ENCODE measurements at regions of chr2 and their contacts with region 1.

Region 1: GRCh38 chr2:134411828-134412638 is 158.2 kb downstream of the MGAT5 start:
- DNase-seq: peak; percentile 82
- ATAC-seq: peak; percentile 96
- H3K4me3 Mint-ChIP-seq: no peak overlapping the region
- H3K27ac Mint-ChIP-seq: peak overlapping the region; percentile 38
- H3K4me1 Mint-ChIP-seq: peaks cover 45% of the 10 kb centered on the region
- H3K27me3 Mint-ChIP-seq: no peaks in the 10 kb centered on the region
- CTCF ChIP-seq: peak; percentile 62

Region 2: DNA sequence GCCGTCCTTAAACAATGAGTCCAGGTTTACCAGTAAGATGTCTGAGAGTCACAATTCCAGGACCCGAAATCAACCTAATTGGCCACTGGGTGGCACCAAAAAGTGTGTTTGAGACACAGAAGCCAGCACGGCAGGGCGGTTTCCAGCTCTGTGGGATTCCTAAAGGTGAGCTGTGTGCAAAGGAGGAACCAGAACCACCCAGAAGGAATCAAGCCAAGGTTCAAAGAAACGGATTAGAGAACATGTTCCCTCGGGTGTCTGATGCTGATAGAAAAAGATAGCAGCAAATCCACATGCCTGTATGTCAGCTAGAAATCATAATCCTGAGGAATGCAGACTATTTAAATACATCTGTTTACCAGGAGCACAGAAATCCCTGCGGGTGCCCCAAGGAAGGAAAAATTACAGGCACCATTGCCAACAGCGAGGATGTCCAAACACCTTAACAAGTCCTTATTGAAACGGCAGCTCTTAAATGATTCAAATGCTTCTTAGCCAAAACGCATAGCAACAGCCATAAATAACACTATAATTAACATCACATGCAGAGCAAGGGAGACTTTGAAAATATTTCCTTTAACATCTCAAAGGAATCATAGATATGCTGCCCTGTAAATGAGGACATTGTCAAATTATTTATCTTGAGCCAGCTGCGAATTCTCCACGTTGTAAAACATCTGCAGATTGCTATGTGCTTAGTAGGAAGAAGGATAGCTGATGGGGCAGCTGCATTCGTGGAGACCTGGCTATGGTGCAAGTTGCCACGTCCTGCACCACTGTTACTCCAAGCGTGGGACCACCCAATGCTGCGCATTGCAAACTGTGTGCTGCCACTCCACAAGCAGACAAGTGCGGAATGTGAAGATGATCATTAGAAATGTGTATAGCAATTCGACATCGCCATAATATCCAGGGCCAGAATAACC is 525.0 kb before region 1 on chr2:
- CTCF ChIA-PET with region 1: interaction called, 16 read pairs
- POLR2A ChIA-PET with region 1: no interaction called
- intact Hi-C with region 1: no loop called
- DNase-seq: peak; percentile 67
- ATAC-seq: peak; percentile 51
- H3K4me3 Mint-ChIP-seq: no peak overlapping the region
- H3K27ac Mint-ChIP-seq: no peak overlapping the region
- H3K4me1 Mint-ChIP-seq: no peaks in the 10 kb centered on the region
- H3K27me3 Mint-ChIP-seq: peaks cover 7% of the 10 kb centered on the region
- CTCF ChIP-seq: peak; percentile 51

Region 3: GRCh38 chr2:134127496-134127895 is 284.5 kb before region 1 on chr2:
- CTCF ChIA-PET with region 1: interaction called, 14 read pairs
- POLR2A ChIA-PET with region 1: interaction called, 3 read pairs
- intact Hi-C with region 1: no loop called
- DNase-seq: peak; percentile 86
- ATAC-seq: peak; percentile 93
- H3K4me3 Mint-ChIP-seq: peak overlapping the region; percentile 1
- H3K27ac Mint-ChIP-seq: no peak overlapping the region
- H3K4me1 Mint-ChIP-seq: peaks cover 77% of the 10 kb centered on the region
- H3K27me3 Mint-ChIP-seq: no peaks in the 10 kb centered on the region
- CTCF ChIP-seq: no peak

Region 4: DNA sequence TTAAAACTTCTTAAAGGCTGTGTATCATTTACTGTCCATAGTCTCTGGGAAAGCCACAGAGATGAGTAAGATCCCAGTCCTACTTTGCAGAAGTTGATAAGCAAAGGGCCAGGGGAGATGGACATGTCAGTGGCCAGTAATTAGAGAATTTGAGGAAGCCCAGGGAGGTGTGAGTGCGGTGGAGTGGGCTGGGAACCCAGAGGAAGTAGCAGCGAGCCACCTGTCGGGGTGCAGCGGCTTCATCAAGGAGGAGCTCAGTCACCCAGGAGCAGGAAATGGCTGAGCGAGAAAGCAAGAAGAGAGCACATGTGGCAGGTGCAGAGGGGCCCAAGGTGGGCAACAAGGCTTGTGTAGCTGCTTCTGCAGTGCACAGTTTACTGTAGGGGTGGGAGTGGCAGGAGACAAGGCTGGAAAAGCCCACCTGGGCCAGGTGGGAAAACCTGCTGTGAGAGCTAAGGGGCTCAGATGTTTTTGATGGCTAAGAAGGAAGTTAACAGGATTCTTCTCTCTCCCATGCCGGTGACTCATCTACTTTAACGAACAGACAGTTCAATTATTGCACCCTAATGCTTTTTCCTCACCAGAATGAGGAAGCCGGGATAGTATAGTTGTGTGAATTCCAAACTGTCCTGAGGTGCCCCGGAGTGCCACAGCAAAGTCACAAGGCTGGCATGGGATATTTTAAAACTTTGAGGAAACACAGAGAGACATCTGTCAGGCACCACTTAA is 192.9 kb before region 1 on chr2:
- CTCF ChIA-PET with region 1: interaction called, 11 read pairs
- POLR2A ChIA-PET with region 1: no interaction called
- intact Hi-C with region 1: no loop called
- DNase-seq: peak; percentile 63
- ATAC-seq: no peak
- H3K4me3 Mint-ChIP-seq: peak overlapping the region; percentile 52
- H3K27ac Mint-ChIP-seq: peak overlapping the region; percentile 92
- H3K4me1 Mint-ChIP-seq: peaks cover 71% of the 10 kb centered on the region
- H3K27me3 Mint-ChIP-seq: no peaks in the 10 kb centered on the region
- CTCF ChIP-seq: no peak

Region 5: DNA sequence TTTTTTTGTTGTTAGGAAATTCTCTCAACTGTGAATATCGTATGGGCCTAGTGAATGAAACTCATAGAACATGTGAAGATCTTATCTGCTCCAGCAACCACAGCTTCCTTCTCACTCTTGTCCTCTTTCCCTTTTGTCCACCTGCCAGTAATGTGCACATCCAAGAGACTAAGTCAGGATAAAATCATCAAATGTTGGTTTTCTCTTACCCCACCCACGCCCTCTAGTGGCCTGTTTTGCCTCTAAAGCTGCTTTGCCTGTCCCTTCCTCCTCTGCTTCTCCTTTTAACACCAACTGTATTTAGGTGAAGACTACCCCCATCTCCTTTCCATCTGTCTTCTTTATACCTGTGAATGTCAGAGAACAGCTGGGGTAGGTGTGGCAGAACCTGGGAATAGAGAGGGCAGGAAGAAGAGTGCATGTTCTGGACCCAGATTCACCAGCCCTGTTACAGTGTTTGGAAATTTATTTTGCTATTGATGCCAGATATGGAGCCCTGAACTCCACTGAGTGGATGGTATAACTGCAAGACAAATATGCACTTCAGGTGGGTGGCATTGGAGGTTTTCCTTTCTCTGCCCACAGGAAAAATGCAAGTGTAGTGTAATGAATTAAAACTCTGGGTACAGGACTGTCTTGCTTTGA is 166.6 kb before region 1 on chr2:
- CTCF ChIA-PET with region 1: interaction called, 21 read pairs
- POLR2A ChIA-PET with region 1: no interaction called
- intact Hi-C with region 1: loop called (anchors 10 kb)
- DNase-seq: peak; percentile 90
- ATAC-seq: peak; percentile 40
- H3K4me3 Mint-ChIP-seq: no peak overlapping the region
- H3K27ac Mint-ChIP-seq: peak overlapping the region; percentile 13
- H3K4me1 Mint-ChIP-seq: peaks cover 79% of the 10 kb centered on the region
- H3K27me3 Mint-ChIP-seq: no peaks in the 10 kb centered on the region
- CTCF ChIP-seq: peak; percentile 88

Region 6: GRCh38 chr2:134261398-134262131 is 150.5 kb before region 1 on chr2:
- CTCF ChIA-PET with region 1: interaction called, 5 read pairs
- POLR2A ChIA-PET with region 1: no interaction called
- intact Hi-C with region 1: loop called (anchors 10 kb)
- DNase-seq: no peak
- ATAC-seq: no peak
- H3K4me3 Mint-ChIP-seq: no peak overlapping the region
- H3K27ac Mint-ChIP-seq: peak overlapping the region; percentile 2
- H3K4me1 Mint-ChIP-seq: peaks cover 67% of the 10 kb centered on the region
- H3K27me3 Mint-ChIP-seq: no peaks in the 10 kb centered on the region
- CTCF ChIP-seq: no peak

Region 7: DNA sequence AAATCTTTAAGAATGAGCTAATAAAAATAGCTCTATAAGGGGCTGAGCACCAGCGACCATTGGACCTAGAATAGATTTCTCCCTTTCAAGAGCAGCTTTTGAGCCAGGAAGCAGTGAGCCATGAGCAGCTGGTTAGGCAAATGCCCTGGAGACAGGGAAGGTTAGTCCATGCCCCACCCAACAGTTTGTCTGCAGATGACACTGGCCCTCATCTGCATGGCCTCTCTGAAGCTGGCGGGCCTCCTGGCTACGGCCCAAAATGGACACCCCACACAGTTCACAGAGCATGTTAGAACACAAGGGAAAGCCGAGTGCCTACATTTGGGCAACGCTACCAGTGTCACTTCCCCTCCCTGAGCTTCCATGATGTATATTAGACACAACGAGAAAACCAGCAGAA is 42.9 kb after region 1 on chr2:
- CTCF ChIA-PET with region 1: interaction called, 10 read pairs
- POLR2A ChIA-PET with region 1: no interaction called
- intact Hi-C with region 1: no loop called
- DNase-seq: no peak
- ATAC-seq: no peak
- H3K4me3 Mint-ChIP-seq: no peak overlapping the region
- H3K27ac Mint-ChIP-seq: no peak overlapping the region
- H3K4me1 Mint-ChIP-seq: no peaks in the 10 kb centered on the region
- H3K27me3 Mint-ChIP-seq: no peaks in the 10 kb centered on the region
- CTCF ChIP-seq: no peak